ENCODE measurements at regions of chr5 and their contacts with region 1.

Region 1: DNA sequence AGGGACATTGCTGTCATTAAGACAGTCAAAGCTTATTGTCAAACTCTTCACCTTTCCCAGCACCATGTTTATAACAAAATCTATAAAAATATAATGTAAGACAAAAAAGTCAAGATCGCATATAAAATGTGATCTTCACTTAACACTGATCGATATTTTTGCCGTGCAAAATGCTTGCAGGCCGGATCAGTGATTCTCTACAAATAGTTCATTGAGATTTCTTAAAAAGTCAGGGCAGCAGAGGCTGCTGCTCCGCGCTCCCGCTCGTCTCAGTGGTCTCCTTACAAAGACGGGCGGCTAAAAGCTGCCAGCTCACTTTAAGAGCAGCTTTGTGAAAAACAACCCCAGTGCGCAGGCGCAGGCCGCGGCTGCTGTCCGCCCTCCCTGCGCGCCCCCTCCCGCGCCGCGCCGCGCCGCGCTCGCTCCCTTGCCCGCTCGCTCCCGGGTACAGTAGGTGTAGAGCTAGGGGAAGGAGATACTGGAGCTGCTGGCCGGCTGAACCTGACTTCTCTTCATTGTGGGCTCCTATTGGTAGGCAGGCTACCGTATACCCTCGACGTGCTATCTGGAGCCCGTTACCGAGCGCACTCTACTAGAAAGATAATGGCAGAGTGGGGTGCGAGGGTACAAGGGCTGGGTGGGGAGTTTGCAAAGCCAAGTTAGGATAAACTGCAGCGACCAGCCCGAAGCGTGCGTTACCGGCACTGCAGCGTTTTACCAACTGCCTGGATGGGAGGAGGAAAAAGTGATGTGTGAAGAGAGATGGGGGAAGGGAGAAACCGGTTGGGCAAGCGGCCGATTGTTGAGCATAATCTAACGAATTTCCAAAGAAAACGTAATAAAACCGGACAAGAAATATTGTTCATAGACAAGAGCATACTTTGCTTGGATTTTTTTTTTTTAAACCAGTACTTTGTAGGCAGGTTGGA is at the start of gene ARRDC3:
- DNase-seq: peak; percentile 91
- H3K4me3 ChIP-seq: peak within 1 kb of the TSS; percentile 86
- H3K27ac ChIP-seq: peak within 1 kb of the TSS; percentile 82
- H3K27me3 ChIP-seq: no peaks in the 10 kb centered on the region
- CTCF ChIP-seq: no peak
- polyA plus RNA-seq, gene ARRDC3: 26.7 and 38.3 TPM in 2 replicates

Region 2: GRCh38 chr5:90932052-90932699 is 451.1 kb before region 1 on chr5:
- CTCF ChIA-PET with region 1: interaction called, 200 read pairs
- POLR2A ChIA-PET with region 1: interaction called, 4 read pairs
- DNase-seq: peak; percentile 26
- H3K4me3 ChIP-seq: no peak overlapping the region
- H3K27ac ChIP-seq: no peak overlapping the region
- H3K27me3 ChIP-seq: no peaks in the 10 kb centered on the region
- CTCF ChIP-seq: peak; percentile 88

Region 3: DNA sequence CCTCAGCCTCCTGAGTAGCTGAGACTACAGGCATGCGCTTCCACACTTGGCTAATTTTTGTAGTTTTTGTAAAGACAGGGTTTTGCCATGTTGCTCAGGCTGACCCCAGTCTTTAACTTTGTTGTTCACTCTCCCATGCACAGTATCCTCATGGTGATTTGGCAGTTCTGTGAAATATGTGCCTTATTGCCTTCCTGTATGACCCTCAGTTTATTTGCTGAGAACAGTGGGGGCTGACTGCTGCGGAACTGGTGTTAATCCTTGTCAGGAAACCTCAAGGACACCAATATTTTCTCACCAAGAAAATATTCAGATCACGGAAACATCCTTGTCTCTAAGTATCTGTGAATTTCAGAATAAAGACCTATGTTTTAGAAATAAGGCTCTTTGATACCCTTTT is 288.0 kb before region 1 on chr5:
- CTCF ChIA-PET with region 1: interaction called, 21 read pairs
- POLR2A ChIA-PET with region 1: no interaction called
- DNase-seq: no peak
- H3K4me3 ChIP-seq: no peak overlapping the region
- H3K27ac ChIP-seq: no peak overlapping the region
- H3K27me3 ChIP-seq: peaks cover 2% of the 10 kb centered on the region
- CTCF ChIP-seq: no peak

Region 4: GRCh38 chr5:91119981-91120850 is 263.1 kb before region 1 on chr5:
- CTCF ChIA-PET with region 1: interaction called, 12 read pairs
- POLR2A ChIA-PET with region 1: interaction called, 9 read pairs
- DNase-seq: no peak
- H3K4me3 ChIP-seq: no peak overlapping the region
- H3K27ac ChIP-seq: no peak overlapping the region
- H3K27me3 ChIP-seq: no peaks in the 10 kb centered on the region
- CTCF ChIP-seq: no peak

Region 5: GRCh38 chr5:91219803-91220371 is 163.4 kb before region 1 on chr5:
- CTCF ChIA-PET with region 1: interaction called, 20 read pairs
- POLR2A ChIA-PET with region 1: interaction called, 8 read pairs
- DNase-seq: no peak
- H3K4me3 ChIP-seq: no peak overlapping the region
- H3K27ac ChIP-seq: no peak overlapping the region
- H3K27me3 ChIP-seq: no peaks in the 10 kb centered on the region
- CTCF ChIP-seq: peak; percentile 26; the same call in 1 of the 2 replicates

Region 6: GRCh38 chr5:91366571-91366970 is 16.7 kb before region 1 on chr5:
- CTCF ChIA-PET with region 1: interaction called, 53 read pairs
- POLR2A ChIA-PET with region 1: interaction called, 5 read pairs
- DNase-seq: no peak
- H3K4me3 ChIP-seq: no peak overlapping the region
- H3K27ac ChIP-seq: no peak overlapping the region
- H3K27me3 ChIP-seq: no peaks in the 10 kb centered on the region
- CTCF ChIP-seq: no peak

Region 7: GRCh38 chr5:91408710-91409109 is 25.4 kb after region 1 on chr5:
- CTCF ChIA-PET with region 1: interaction called, 35 read pairs
- POLR2A ChIA-PET with region 1: interaction called, 3 read pairs
- DNase-seq: no peak
- H3K4me3 ChIP-seq: no peak overlapping the region
- H3K27ac ChIP-seq: no peak overlapping the region
- H3K27me3 ChIP-seq: no peaks in the 10 kb centered on the region
- CTCF ChIP-seq: no peak

Region 8: GRCh38 chr5:91486638-91487037 is 103.3 kb after region 1 on chr5:
- CTCF ChIA-PET with region 1: no interaction called
- POLR2A ChIA-PET with region 1: no interaction called
- DNase-seq: no peak
- H3K4me3 ChIP-seq: no peak overlapping the region
- H3K27ac ChIP-seq: no peak overlapping the region
- H3K27me3 ChIP-seq: no peaks in the 10 kb centered on the region
- CTCF ChIP-seq: no peak